ENCODE measurements at regions of chr5 and their contacts with region 1.

Region 1: DNA sequence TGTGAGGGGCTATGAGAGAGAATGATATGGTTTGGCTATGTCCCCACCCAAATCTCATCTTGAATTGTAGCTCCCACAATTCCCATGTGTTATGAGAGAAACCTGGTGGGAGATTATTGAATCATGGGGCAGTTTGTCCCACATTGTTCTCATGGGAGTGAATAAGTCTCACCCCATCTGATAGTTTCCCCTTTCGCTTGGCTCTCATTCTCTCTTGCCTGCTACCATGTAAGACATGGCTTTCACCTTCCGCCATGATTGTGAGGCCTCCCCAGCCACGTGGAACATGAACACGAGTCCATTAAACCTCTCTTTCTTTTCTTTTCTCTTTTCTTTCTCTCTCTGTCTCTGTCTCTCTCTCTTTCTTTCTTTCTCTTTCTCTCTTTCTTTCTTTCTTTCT is 743.4 kb upstream of the CTNND2 start:
- DNase-seq: no peak
- H3K4me3 ChIP-seq: no peak overlapping the region
- H3K27ac ChIP-seq: no peak overlapping the region
- H3K4me1 ChIP-seq: no peaks in the 10 kb centered on the region
- H3K27me3 ChIP-seq: no peaks in the 10 kb centered on the region
- CTCF ChIP-seq: no peak

Region 2: GRCh38 chr5:12661617-12662370 is 14.2 kb after region 1 on chr5:
- CTCF ChIA-PET with region 1: no interaction called
- dilution Hi-C with region 1: no loop called
- in situ Hi-C with region 1: no loop called
- intact Hi-C with region 1: loop called (anchors 2 kb)
- DNase-seq: no peak
- H3K4me3 ChIP-seq: no peak overlapping the region
- H3K27ac ChIP-seq: no peak overlapping the region
- H3K4me1 ChIP-seq: no peaks in the 10 kb centered on the region
- H3K27me3 ChIP-seq: no peaks in the 10 kb centered on the region
- CTCF ChIP-seq: no peak

Measured in mammary epithelial cell (primary cell).